ENCODE measurements at regions of chr2 and their contacts with region 1.

Region 1: GRCh38 chr2:30679426-30680088 is 127.7 kb downstream of the CAPN13 start:
- DNase-seq: no peak
- H3K4me3 ChIP-seq: no peak overlapping the region
- H3K27ac ChIP-seq: no peak overlapping the region
- H3K4me1 ChIP-seq: no peaks in the 10 kb centered on the region
- H3K27me3 ChIP-seq: no peaks in the 10 kb centered on the region
- CTCF ChIP-seq: no peak
- POLR2A ChIP-seq: no peak

Region 2: GRCh38 chr2:30481323-30481800 is 198.2 kb before region 1 on chr2:
- intact Hi-C with region 1: no loop called
- DNase-seq: no peak
- H3K4me3 ChIP-seq: no peak overlapping the region
- H3K27ac ChIP-seq: no peak overlapping the region
- H3K4me1 ChIP-seq: no peaks in the 10 kb centered on the region
- H3K27me3 ChIP-seq: no peaks in the 10 kb centered on the region
- CTCF ChIP-seq: no peak
- POLR2A ChIP-seq: no peak

Region 3: GRCh38 chr2:30588994-30589393 is 90.6 kb before region 1 on chr2:
- intact Hi-C with region 1: loop called (anchors 5 kb)
- DNase-seq: no peak
- H3K4me3 ChIP-seq: no peak overlapping the region
- H3K27ac ChIP-seq: no peak overlapping the region
- H3K4me1 ChIP-seq: no peaks in the 10 kb centered on the region
- H3K27me3 ChIP-seq: no peaks in the 10 kb centered on the region
- CTCF ChIP-seq: no peak
- POLR2A ChIP-seq: no peak

Region 4: DNA sequence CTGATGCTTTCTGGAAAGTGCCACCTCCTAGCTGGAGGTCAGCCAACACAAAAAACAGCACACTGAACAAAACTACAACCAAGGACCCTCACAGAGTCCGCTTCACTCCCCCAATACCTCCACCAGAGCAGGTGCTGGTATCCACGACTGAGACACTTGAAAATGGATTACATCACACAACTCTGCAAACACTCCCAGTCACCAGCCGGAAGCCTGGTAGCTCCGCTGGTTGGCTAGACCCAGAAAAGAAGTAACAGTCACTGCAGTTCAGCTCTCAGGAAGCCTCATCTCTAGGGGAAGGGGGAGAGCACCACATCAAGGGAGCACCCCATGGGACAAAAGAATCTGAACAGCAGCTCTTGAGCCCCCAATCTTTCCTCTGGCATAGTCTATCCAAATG is 57.1 kb before region 1 on chr2:
- intact Hi-C with region 1: no loop called
- DNase-seq: no peak
- H3K4me3 ChIP-seq: no peak overlapping the region
- H3K27ac ChIP-seq: no peak overlapping the region
- H3K4me1 ChIP-seq: no peaks in the 10 kb centered on the region
- H3K27me3 ChIP-seq: no peaks in the 10 kb centered on the region
- CTCF ChIP-seq: no peak
- POLR2A ChIP-seq: no peak